ENCODE measurements at regions of chr1 and their contacts with region 1.

Region 1: GRCh38 chr1:6359216-6360116 is 34.1 kb downstream of the ACOT7 start:
- DNase-seq: peak in 13 of 14 experiments; percentile 22 to 78 (median 46)
- ATAC-seq: peak; percentile 55
- H3K4me3 ChIP-seq: peak overlapping the region; percentile 27
- H3K4me3 Mint-ChIP-seq: peak overlapping the region; percentile 79
- H3K27ac ChIP-seq: peak overlapping the region; percentile 58 to 86
- H3K27ac Mint-ChIP-seq: peak overlapping the region; percentile 92
- H3K4me1 ChIP-seq: peaks cover 59% of the 10 kb centered on the region
- H3K4me1 Mint-ChIP-seq: peaks cover 65% of the 10 kb centered on the region
- H3K27me3 ChIP-seq: no peaks in the 10 kb centered on the region
- H3K27me3 Mint-ChIP-seq: no peaks in the 10 kb centered on the region
- CTCF ChIP-seq: no peak

Region 2: DNA sequence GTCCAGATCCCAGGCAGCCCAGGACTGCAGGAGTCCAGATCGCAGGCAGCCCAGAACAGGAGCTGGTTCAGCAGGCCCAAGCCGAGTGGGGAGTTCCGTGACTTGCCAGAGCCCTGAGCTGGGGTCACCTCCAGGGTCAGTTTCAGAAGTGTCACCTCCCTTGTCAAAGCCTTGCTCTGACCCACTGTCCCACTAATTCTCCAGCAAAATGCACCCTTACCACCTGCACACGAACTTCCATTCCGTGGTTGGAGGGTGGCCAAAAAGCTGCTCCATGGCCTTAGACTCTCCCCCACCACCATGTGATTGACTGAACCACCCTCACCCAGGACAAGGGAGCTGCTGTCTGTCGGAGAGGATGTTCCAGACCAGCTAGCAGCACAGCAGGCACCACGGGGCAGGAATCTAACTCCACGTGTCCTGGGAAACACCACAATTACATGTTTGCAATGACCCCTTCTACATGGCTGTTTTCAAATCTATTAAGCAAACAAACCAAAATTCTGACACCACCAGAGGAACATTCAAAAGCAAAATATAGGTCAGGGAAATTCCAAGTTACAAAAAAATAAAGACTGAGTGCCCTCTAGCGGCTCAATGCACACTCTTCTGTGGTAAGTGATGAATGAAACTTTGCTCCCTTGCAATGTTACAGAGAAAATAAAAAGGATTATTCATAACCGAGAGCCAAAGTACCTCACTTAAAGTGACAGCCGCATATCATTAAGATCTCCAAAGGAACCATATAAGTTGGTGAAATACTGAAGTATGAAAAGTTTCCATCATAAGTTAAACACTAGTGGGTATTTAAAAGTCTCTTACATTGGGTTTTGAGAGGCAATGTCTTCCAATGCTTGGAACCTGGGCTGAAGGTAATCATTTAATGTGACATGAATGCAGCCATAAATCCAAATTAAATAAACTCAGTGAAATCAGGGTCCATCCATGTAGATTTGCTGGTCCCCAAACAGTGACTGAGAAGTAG is 443.6 kb before region 1 on chr1:
- CTCF ChIA-PET with region 1: no interaction called
- POLR2A ChIA-PET with region 1: no interaction called
- intact Hi-C with region 1: no loop called
- DNase-seq: peak in 7 of 14 experiments; percentile 7 to 65 (median 39)
- ATAC-seq: peak; percentile 52
- H3K4me3 ChIP-seq: no peak overlapping the region
- H3K4me3 Mint-ChIP-seq: no peak overlapping the region
- H3K27ac ChIP-seq: no peak overlapping the region
- H3K27ac Mint-ChIP-seq: no peak overlapping the region
- H3K4me1 ChIP-seq: peaks cover 4% of the 10 kb centered on the region
- H3K4me1 Mint-ChIP-seq: peaks cover 6% of the 10 kb centered on the region
- H3K27me3 ChIP-seq: no peaks in the 10 kb centered on the region
- H3K27me3 Mint-ChIP-seq: no peaks in the 10 kb centered on the region
- CTCF ChIP-seq: peak; percentile 66

Region 3: GRCh38 chr1:6338695-6339094 is 20.8 kb before region 1 on chr1:
- CTCF ChIA-PET with region 1: no interaction called
- POLR2A ChIA-PET with region 1: no interaction called
- intact Hi-C with region 1: no loop called
- DNase-seq: no peak
- ATAC-seq: no peak
- H3K4me3 ChIP-seq: no peak overlapping the region
- H3K4me3 Mint-ChIP-seq: no peak overlapping the region
- H3K27ac ChIP-seq: no peak overlapping the region
- H3K27ac Mint-ChIP-seq: no peak overlapping the region
- H3K4me1 ChIP-seq: no peaks in the 10 kb centered on the region
- H3K4me1 Mint-ChIP-seq: peaks cover 4% of the 10 kb centered on the region
- H3K27me3 ChIP-seq: no peaks in the 10 kb centered on the region
- H3K27me3 Mint-ChIP-seq: no peaks in the 10 kb centered on the region
- CTCF ChIP-seq: no peak

Region 4: GRCh38 chr1:6380037-6380436 is 20.6 kb after region 1 on chr1:
- CTCF ChIA-PET with region 1: no interaction called
- POLR2A ChIA-PET with region 1: no interaction called
- intact Hi-C with region 1: no loop called
- DNase-seq: no peak
- ATAC-seq: no peak
- H3K4me3 ChIP-seq: no peak overlapping the region
- H3K4me3 Mint-ChIP-seq: no peak overlapping the region
- H3K27ac ChIP-seq: no peak overlapping the region
- H3K27ac Mint-ChIP-seq: no peak overlapping the region
- H3K4me1 ChIP-seq: no peaks in the 10 kb centered on the region
- H3K4me1 Mint-ChIP-seq: no peaks in the 10 kb centered on the region
- H3K27me3 ChIP-seq: no peaks in the 10 kb centered on the region
- H3K27me3 Mint-ChIP-seq: no peaks in the 10 kb centered on the region
- CTCF ChIP-seq: no peak

Region 5: DNA sequence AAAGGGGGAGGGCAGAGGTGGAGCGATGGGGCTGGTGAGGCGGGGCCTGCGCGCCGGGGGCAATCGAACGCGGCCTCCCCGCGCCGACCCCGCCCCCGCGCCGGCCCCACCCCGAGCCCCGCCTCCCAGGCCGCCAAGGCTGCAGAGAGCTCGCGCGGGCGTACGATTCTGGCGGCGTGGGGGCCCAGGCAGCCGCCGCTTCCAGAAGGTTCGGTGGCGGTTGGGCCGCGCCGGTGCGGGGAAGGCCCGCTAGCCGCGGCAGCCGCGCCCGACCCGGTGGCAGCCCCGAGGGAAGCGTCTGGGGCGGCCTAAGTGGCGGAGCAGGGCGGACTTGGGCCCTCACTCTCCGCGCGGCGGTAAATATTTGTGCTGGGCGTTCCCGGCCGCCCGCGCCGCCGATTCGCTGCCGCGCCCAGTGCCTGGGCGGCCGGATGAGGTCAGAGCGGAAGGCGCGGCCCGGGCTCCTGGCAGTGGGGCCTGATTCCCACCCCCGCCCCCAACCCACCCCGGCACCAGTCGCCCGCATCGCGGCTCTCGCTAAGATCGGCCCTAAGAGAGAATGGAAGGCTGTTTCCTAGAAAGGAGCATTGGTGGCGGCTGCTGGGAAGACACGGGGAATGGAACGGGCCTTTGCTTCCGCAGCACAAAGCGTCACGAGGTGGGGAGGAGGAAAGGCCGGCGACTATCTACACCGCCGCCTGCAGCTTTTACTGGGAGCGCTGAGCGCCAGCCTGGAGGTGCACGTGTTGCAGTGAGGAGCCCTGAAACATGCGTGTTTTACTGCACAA is 34.1 kb after region 1 on chr1 and contains the start of gene ACOT7:
- CTCF ChIA-PET with region 1: no interaction called
- POLR2A ChIA-PET with region 1: interaction called, 41 read pairs
- intact Hi-C with region 1: loop called in 1 of 2 experiments (anchors 2 kb)
- DNase-seq: peak; percentile 84 to 97 (median 90)
- ATAC-seq: peak; percentile 90
- H3K4me3 ChIP-seq: peak within 1 kb of the TSS; percentile 69
- H3K4me3 Mint-ChIP-seq: peak within 1 kb of the TSS; percentile 92
- H3K27ac ChIP-seq: peak within 1 kb of the TSS; percentile 69 to 81
- H3K27ac Mint-ChIP-seq: peak within 1 kb of the TSS; percentile 90
- H3K4me1 ChIP-seq: peaks cover 27% of the 10 kb centered on the region
- H3K4me1 Mint-ChIP-seq: peaks cover 31% of the 10 kb centered on the region
- H3K27me3 ChIP-seq: no peaks in the 10 kb centered on the region
- H3K27me3 Mint-ChIP-seq: no peaks in the 10 kb centered on the region
- CTCF ChIP-seq: no peak
- total RNA-seq, gene ACOT7: 5.3 to 5.4 TPM

Region 6: DNA sequence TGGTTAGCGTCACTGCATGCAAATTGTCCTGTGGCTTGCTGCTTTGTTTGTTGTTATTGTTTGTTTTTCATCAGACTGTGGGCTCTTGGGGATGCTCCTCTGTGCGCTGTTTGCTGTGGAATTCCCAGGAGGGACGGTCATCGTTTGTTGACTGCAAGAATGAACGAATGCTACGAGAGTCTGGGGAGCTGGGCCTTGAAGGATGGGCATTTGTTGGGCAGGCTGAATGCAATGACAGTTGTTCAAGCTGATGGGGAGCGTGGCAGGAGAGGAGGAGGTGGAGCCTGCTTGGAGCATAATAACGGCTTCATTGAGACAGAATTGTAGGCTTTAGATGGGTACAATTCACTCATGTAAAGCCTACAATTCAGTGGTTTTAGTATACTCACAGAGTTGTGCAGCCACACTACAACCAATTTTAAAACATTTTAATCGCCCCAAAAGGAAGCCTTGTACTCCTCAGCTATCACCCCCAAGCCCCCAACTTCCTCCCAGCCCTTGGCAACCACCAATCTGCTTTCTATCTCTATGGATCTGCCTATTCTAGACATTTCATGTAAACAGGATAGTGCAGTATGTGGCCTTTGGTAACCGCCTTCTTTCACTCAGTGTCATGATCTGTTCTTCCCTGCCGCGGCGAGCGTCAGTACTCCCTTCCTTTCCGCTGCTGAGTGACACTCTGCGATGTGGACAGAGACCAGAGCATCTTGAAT is 616.0 kb after region 1 on chr1:
- CTCF ChIA-PET with region 1: no interaction called
- POLR2A ChIA-PET with region 1: no interaction called
- intact Hi-C with region 1: no loop called
- DNase-seq: no peak
- ATAC-seq: no peak
- H3K4me3 ChIP-seq: no peak overlapping the region
- H3K4me3 Mint-ChIP-seq: no peak overlapping the region
- H3K27ac ChIP-seq: no peak overlapping the region
- H3K27ac Mint-ChIP-seq: no peak overlapping the region
- H3K4me1 ChIP-seq: no peaks in the 10 kb centered on the region
- H3K4me1 Mint-ChIP-seq: no peaks in the 10 kb centered on the region
- H3K27me3 ChIP-seq: peaks cover 0 to 1% of the 10 kb centered on the region in 2 experiments
- H3K27me3 Mint-ChIP-seq: no peaks in the 10 kb centered on the region
- CTCF ChIP-seq: no peak